Activated CD8-positive, alpha-beta T cell treated with anti-CD3 and anti-CD28 coated beads, Interleukin-2, amount 10 ng/mL, durations not matched to agents 7 days and 5 days (primary cell): ENCODE measurements at regions of chr6 and their contacts with region 1.

Region 1: GRCh38 chr6:32838114-32838958 is at the start of gene TAP2:
- DNase-seq: peak; percentile 98
- ATAC-seq: peak; percentile 85
- H3K4me3 Mint-ChIP-seq: peak within 1 kb of the TSS; percentile 82
- H3K27ac Mint-ChIP-seq: peak within 1 kb of the TSS; percentile 99
- H3K4me1 Mint-ChIP-seq: peaks cover 80% of the 10 kb centered on the region
- H3K27me3 Mint-ChIP-seq: no peaks in the 10 kb centered on the region
- total RNA-seq, gene TAP2: 145 to 159 TPM

Region 2: DNA sequence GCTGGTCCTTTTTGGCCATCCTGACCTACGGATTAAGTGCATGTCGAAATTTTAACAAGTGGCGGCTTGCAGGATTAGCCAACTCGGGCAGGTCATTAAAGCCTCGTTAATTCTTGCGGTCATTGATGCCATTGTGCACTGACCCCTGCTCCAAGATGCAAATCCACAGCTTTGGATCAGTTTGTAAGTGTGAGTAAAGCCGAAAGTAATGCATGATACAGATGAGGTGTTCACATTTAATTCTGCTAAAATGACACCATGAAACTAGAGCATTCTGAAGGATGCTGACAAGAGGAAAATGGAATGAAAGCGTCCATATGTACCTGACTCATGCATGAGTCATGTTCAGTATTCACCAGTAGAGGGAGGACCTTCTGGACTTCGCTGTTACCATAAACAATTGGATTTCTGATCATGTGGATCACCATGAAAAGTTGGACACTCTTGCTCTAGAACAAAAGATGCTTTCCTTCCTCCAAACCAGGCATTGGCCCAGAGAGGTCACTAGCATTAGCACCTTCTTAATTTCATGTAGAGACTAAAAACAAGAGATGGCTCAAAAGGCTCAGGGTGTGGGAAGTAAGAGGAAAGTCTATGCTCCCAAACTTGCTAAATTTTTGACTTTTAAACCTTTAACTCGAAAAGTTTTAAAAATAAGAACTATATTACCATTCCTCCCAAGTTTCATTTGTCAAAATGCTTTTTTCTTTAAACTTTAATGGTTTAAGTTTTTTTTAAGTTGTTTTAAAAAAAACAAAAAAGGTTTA is 1780.0 kb before region 1 on chr6:
- CTCF ChIA-PET with region 1: no interaction called
- POLR2A ChIA-PET with region 1: no interaction called
- DNase-seq: no peak
- ATAC-seq: no peak
- H3K4me3 Mint-ChIP-seq: no peak overlapping the region
- H3K27ac Mint-ChIP-seq: no peak overlapping the region
- H3K4me1 Mint-ChIP-seq: no peaks in the 10 kb centered on the region
- H3K27me3 Mint-ChIP-seq: peaks cover 30% of the 10 kb centered on the region

Region 3: GRCh38 chr6:32807020-32807580 is 31.2 kb before region 1 on chr6:
- CTCF ChIA-PET with region 1: interaction called, 10 read pairs
- POLR2A ChIA-PET with region 1: interaction called, 3 read pairs
- DNase-seq: no peak
- ATAC-seq: no peak
- H3K4me3 Mint-ChIP-seq: no peak overlapping the region
- H3K27ac Mint-ChIP-seq: no peak overlapping the region
- H3K4me1 Mint-ChIP-seq: peaks cover 12% of the 10 kb centered on the region
- H3K27me3 Mint-ChIP-seq: peaks cover 40% of the 10 kb centered on the region

Region 4: DNA sequence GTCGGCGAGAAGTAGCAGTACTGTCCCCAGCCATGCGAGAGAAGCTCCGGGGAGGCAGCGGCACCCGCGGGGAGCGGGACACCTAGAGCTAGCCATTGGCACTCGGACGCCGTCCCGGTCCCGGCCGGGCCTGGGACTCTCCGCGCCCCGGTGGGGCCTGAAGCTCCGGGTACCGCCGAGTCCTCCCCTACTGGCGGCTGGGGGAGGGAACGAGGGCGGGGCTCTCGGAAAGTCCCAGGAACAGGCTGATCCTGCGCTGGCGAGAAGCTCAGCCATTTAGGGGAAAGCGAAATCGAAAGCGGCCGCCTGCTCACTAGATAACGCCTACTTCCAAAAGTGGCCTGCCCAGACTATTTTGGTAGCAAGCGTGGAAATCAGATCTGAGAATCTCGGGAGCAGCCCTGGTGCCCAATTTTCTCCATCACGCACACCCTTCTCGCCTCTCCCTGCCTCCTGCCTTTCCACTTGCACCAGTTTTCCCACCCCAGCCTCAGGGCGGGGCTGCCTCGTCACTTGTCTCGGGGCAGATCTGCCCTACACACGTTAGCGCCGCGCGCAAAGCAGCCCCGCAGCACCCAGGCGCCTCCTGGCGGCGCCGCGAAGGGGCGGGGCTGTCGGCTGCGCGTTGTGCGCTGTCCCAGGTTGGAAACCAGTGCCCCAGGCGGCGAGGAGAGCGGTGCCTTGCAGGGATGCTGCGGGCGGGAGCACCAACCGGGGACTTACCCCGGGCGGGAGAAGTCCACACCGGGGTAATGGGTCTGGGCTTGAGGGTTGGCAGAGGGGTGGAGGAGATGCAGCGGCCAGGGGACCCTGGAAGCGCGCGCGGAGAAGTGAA is 15.4 kb after region 1 on chr6 and contains the starts of genes PSMB9 and TAP1:
- CTCF ChIA-PET with region 1: interaction called, 400 read pairs
- POLR2A ChIA-PET with region 1: interaction called, 812 read pairs
- DNase-seq: peak; percentile 97
- ATAC-seq: peak; percentile 85
- H3K4me3 Mint-ChIP-seq: peak within 1 kb of the TSS; percentile 97
- H3K27ac Mint-ChIP-seq: peak within 1 kb of the TSS; percentile 100
- H3K4me1 Mint-ChIP-seq: peaks cover 58% of the 10 kb centered on the region
- H3K27me3 Mint-ChIP-seq: no peaks in the 10 kb centered on the region
- total RNA-seq, gene PSMB9: 319 to 325 TPM
- total RNA-seq, gene TAP1: 319 to 328 TPM

Region 5: GRCh38 chr6:32885698-32886286 is 47.5 kb after region 1 on chr6:
- CTCF ChIA-PET with region 1: interaction called, 11 read pairs
- POLR2A ChIA-PET with region 1: interaction called, 3 read pairs
- DNase-seq: no peak
- ATAC-seq: peak; percentile 61
- H3K4me3 Mint-ChIP-seq: no peak overlapping the region
- H3K27ac Mint-ChIP-seq: no peak overlapping the region
- H3K4me1 Mint-ChIP-seq: peaks cover 2% of the 10 kb centered on the region
- H3K27me3 Mint-ChIP-seq: peaks cover 16% of the 10 kb centered on the region

Region 6: DNA sequence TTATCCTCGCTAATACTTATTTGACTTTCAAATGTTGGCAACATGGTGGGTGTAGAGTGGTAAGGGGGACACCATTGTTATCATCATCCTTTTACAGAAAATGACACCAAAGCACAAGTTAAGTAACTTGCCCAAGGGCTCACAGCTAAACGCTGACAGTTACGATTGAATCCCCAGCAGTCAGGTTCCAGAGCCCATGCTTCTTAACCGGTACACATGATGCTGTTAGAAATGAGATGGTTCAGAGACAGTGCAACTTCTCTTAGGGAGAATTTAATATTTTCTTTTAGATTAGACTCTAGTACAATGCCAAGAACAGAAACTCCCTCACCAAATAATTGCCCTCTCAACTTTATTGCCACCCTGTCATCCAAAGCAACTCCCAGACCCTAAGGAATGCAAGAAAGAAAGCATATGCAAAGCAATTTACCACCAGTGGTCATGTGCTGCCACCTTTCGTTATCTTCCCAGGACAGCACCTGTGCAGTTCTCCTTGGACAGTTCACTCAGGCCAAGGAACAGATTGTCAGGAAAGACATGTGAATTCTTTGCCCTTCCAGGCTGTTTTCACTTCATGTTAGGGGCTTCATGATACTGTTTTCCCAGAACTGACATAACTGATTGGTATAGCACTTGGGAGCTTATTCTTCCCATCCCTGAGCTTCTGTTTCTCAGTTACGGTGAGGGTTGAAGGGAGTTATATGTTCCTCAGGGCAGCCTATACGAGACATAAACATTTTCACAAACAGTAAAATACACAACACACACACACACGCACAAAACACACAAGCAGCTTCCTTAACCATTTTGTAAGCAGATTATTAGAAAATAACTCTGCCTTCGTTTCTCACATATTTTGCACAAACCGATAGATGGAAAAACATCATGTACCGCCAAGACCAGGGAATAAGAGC is 109.5 kb after region 1 on chr6:
- CTCF ChIA-PET with region 1: interaction called, 48 read pairs
- POLR2A ChIA-PET with region 1: interaction called, 5 read pairs
- DNase-seq: peak; percentile 67
- ATAC-seq: no peak
- H3K4me3 Mint-ChIP-seq: no peak overlapping the region
- H3K27ac Mint-ChIP-seq: no peak overlapping the region
- H3K4me1 Mint-ChIP-seq: peaks cover 78% of the 10 kb centered on the region
- H3K27me3 Mint-ChIP-seq: no peaks in the 10 kb centered on the region

Region 7: GRCh38 chr6:33000055-33000454 is 161.7 kb after region 1 on chr6:
- CTCF ChIA-PET with region 1: no interaction called
- POLR2A ChIA-PET with region 1: no interaction called
- DNase-seq: peak; percentile 59
- ATAC-seq: peak; percentile 67
- H3K4me3 Mint-ChIP-seq: no peak overlapping the region
- H3K27ac Mint-ChIP-seq: no peak overlapping the region
- H3K4me1 Mint-ChIP-seq: peaks cover 11% of the 10 kb centered on the region
- H3K27me3 Mint-ChIP-seq: peaks cover 36% of the 10 kb centered on the region

Region 8: GRCh38 chr6:33161354-33162331 is 323.3 kb after region 1 on chr6:
- CTCF ChIA-PET with region 1: no interaction called
- POLR2A ChIA-PET with region 1: no interaction called
- DNase-seq: peak; percentile 87
- ATAC-seq: peak; percentile 98
- H3K4me3 Mint-ChIP-seq: peak overlapping the region; percentile 80
- H3K27ac Mint-ChIP-seq: peak overlapping the region; percentile 89
- H3K4me1 Mint-ChIP-seq: peaks cover 20% of the 10 kb centered on the region
- H3K27me3 Mint-ChIP-seq: peaks cover 3% of the 10 kb centered on the region